BJ (cell line): ENCODE measurements at regions of chr2 and their contacts with region 1.

Region 1: DNA sequence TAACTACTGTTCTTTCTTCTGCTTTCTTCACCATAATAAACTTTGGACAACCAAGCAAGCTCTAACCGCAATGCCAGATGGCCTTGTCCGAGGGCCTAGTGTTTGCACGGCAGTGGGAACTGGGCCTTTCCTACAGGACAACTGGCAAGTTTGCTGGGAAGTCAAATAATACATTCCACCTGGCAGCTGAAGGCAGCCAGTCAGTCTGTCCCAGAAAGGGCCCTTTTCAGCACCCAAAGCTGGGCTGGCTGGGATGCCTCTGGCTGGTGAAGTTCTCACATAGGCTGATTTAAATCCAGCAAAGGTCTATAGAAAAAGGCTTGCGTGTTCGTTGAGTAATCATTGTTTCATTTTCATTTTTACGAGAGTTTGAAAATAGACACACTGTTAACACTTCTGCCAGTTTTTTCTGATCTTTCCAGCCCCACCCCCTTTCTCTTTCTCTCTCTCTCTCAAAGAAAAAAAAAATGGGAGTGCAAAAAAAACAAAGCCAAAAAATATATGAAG is 110.0 kb upstream of the EPAS1 start:
- DNase-seq: peak; percentile 80
- H3K4me3 ChIP-seq: peak overlapping the region; percentile 15
- H3K27me3 ChIP-seq: no peaks in the 10 kb centered on the region
- CTCF ChIP-seq: no peak

Region 2: DNA sequence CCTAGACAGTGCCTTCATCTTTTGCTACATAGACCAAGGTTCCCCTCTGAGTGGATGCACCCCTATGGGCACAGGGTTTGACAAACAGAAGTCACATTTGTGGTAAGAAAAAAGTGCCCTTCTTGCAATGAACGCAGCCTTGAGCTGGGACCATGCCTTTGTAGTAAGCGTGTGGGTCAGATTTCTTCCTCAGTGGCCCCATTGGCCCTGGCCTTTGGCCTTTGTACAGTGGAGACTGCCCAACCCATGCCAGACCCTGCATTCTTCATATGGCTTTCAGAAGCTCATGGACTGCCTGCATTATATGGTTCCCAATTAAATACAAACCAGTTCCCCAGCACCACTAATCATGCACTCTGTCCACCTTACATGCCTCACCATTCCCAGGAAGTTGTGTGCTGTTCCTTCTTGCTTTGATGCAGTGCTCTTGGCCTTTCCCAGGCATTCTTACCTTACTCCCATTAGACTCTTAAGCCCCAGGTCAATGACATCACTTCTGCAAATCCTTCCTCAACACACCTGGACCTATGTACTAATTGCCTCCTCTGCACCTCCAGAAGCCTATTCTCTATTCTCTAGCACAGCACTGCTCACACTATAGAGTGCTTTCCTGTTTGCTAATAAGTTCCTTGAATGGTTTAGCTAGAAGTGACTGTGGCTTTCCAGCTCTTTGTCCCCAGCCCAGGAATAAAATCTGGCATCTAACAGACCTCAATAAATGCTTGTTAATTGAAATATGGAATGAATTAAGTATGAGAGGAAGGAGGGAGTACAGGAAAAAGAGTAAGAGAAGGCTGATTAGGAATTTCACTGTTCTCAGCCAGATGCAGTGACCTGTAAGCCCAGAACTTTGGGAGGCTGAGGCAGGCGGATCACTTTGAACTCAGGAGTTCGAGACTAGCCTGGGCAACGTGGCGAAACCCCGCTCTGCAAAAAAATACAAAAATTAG is 352.4 kb after region 1 on chr2:
- CTCF ChIA-PET with region 1: no interaction called
- POLR2A ChIA-PET with region 1: interaction called, 10 read pairs
- DNase-seq: no peak
- H3K4me3 ChIP-seq: no peak overlapping the region
- H3K27me3 ChIP-seq: no peaks in the 10 kb centered on the region
- CTCF ChIP-seq: no peak